ENCODE measurements at regions of chr17 and their contacts with region 1.

Region 1: DNA sequence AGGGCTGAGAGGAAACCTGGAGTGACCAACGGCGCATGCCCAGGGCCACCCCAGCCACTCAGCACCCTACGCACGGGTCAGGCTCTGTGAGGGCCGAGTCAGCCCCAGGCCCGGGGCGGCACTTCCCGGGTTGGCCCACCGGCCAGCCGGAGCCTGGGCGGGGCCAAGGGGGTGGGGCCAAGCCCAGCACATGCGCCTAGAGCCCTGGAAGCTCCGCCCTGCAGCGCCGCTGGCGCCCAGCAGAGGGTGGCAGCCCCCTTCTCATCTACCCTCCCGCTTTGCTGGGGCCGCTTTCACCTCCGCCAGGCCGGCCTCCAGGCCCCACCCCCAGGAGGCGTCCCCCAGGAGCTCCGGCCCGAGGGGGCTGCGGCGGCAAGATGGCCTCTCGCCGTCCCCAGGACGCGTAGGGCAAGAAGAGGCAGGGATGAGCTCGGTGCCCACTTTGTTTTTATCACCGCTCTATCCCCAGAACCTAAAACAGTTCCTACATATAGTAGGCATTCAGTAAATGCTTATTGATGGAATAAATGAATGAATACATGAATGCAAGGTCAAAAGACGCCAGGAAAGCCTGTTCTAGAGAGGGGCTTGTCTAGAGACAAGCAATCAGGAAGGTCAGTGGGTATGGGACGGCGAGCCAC is 31.3 kb downstream of the MYO18A start:
- DNase-seq: peak; percentile 94
- H3K4me3 ChIP-seq: peak overlapping the region in 2 of 3 donors; percentile 34 to 47
- H3K27ac ChIP-seq: peak overlapping the region; percentile 69 to 83 (median 82)
- H3K4me1 ChIP-seq: peaks cover 17 to 53% of the 10 kb centered on the region in 2 donors
- H3K27me3 ChIP-seq: no peaks in the 10 kb centered on the region
- CTCF ChIP-seq: peak; percentile 74 to 99 (median 88)
- POLR2A ChIP-seq: peak in 1 of 2 donors; percentile 58

Region 2: GRCh38 chr17:29084541-29085146 is 64.3 kb before region 1 on chr17:
- intact Hi-C with region 1: no loop called
- DNase-seq: peak; percentile 15 to 30
- H3K4me3 ChIP-seq: no peak overlapping the region
- H3K27ac ChIP-seq: no peak overlapping the region
- H3K4me1 ChIP-seq: no peaks in the 10 kb centered on the region
- H3K27me3 ChIP-seq: no peaks in the 10 kb centered on the region
- CTCF ChIP-seq: no peak
- POLR2A ChIP-seq: no peak

Region 3: DNA sequence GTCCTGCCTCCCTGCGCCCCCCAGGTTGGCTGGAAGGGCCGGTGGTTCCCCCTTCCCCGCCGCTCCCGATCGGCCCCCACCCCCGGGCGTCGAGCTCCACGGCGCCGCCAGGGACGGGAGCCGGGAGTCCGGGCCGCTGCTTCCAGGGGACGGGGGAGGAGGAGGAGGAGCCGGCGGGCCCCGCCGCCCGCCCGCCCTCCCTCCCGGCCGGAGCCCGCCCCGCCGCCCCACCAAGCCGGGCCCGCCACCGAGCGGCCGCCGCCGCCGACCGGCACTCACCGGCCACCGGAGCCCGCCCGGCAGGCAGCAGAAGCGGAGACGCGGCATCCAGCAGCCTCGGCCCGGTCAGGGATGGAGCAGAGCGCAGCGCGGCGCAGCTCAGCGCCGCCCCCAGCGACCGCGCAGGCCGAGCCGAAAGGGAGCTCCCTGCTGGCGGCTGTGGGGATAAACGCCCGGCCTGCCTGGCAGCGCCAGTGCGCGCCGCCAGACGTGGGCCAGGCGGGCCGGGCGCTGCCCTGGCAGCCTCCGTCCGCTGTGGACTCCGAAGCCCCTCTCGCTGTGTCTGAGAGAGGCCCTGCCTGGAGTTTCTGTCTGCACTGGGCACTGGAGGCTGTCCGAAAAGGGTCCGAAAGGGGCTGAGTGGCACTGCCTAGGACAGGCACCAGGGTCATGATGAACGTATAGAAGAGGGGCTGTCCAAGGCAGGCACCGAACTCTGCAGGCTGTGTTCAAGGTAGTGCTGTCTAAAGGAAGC is 31.3 kb after region 1 on chr17 and contains the start of gene MYO18A:
- intact Hi-C with region 1: loop called (anchors 5 kb)
- DNase-seq: peak; percentile 77 to 80
- H3K4me3 ChIP-seq: peak within 1 kb of the TSS in 2 of 3 donors; percentile 33 to 65
- H3K27ac ChIP-seq: peak within 1 kb of the TSS; percentile 73 to 96 (median 84)
- H3K4me1 ChIP-seq: peaks cover 40 to 43% of the 10 kb centered on the region in 2 donors
- H3K27me3 ChIP-seq: no peaks in the 10 kb centered on the region
- CTCF ChIP-seq: peak; percentile 45 to 98 (median 93)
- POLR2A ChIP-seq: peak in 1 of 2 donors; percentile 63
- total RNA-seq, gene MYO18A: 32.1 to 49.8 (median 40.6) TPM

Region 4: GRCh38 chr17:29219378-29220047 is 70.6 kb after region 1 on chr17:
- intact Hi-C with region 1: loop called (anchors 5 kb)
- DNase-seq: peak; percentile 78 to 80
- H3K4me3 ChIP-seq: no peak overlapping the region
- H3K27ac ChIP-seq: no peak overlapping the region
- H3K4me1 ChIP-seq: peaks cover 0 to 16% of the 10 kb centered on the region in 2 donors
- H3K27me3 ChIP-seq: no peaks in the 10 kb centered on the region
- CTCF ChIP-seq: peak; percentile 86 to 97 (median 88)
- POLR2A ChIP-seq: no peak

Region 5: GRCh38 chr17:29293890-29294579 is 145.1 kb after region 1 on chr17 and contains the start of gene NUFIP2:
- intact Hi-C with region 1: loop called (anchors 5 kb)
- DNase-seq: peak; percentile 100
- H3K4me3 ChIP-seq: peak within 1 kb of the TSS; percentile 87 to 99 (median 88)
- H3K27ac ChIP-seq: peak within 1 kb of the TSS; percentile 96 to 100 (median 98)
- H3K4me1 ChIP-seq: peaks cover 23 to 29% of the 10 kb centered on the region in 2 donors
- H3K27me3 ChIP-seq: no peaks in the 10 kb centered on the region
- CTCF ChIP-seq: peak in 1 of 6 experiments; percentile 10
- POLR2A ChIP-seq: peak; percentile 99 to 100
- total RNA-seq, gene NUFIP2: 29.9 to 52.3 (median 41.1) TPM

Measured in thyroid gland (tissue), 4 donors.